Dendritic cell treated with granulocyte-macrophage colony-stimulating factor and Interleukin-4, amounts not matched to agents 40 ng/mL and 50 ng/mL, for 4 days (primary cell): ENCODE measurements at regions of chr2 and their contacts with region 1.

Region 1: DNA sequence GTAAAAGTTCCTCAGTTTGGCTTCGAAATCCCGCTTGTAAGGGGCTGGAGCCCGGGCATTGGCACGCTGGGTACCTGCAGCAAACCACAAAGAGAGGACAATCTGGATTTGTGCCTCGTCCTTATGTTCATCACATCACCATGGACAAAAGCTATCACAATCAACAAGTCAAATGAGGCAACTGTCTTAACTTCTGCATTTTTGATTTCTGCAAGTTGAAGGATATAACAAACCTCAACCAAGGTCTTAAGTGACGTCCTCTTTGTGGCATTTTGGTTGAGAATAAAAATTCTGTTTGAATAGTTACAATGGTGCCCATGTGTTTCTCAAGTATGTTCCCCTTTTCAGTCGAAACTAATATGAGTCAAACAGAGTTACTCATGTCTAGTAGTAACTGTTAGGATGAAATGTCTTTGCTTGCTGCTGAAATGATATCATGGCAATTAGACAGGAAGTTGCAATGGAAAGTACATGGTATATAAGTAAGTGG is 70.8 kb upstream of the STK17B start:
- H3K4me3 Mint-ChIP-seq: no peak overlapping the region
- H3K27ac Mint-ChIP-seq: peak overlapping the region; percentile 92
- H3K4me1 Mint-ChIP-seq: peaks cover 62% of the 10 kb centered on the region
- H3K27me3 Mint-ChIP-seq: no peaks in the 10 kb centered on the region

Region 2: DNA sequence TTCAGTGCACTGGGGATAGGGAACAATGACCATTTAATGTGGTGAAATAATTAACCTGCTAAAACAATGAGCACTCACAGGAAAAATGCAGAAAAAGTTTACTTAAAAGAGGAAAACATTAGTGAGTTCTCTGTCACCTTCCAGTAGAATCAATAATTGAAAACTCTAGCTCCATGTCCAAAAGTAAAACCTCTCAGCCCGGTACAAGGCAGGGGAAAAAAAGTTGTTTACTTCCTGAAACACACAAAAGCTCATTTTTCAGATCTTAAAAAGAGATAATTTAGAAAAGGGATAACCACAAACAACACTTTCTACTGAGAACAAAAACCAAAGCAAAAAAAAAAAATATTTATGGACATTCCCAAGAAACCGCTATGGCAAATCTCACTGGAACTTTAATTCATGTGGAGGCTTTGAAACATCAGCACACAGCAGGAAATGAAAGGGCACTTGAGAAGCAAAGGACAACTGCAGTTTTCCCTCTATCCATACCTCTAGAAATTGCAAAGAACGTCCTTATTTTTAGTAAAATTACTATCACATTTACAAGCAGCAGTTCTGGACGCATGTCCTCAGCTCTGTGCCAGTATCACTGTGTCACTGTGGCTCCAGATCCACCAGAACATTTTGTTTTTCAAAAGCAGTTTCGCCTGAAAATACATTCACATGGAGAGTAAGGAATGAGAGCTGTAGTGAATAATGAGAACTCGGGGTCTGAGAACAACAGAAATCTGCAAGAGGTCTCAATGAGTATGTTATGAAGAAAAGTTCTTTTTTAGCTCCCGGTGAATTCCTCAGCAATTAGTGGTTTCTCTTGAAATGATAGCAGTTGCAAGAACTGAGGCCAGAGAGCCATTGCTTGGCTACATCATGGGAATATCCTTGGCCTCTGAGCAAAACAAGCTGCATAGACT is 128.9 kb before region 1 on chr2:
- intact Hi-C with region 1: no loop called
- H3K4me3 Mint-ChIP-seq: no peak overlapping the region
- H3K27ac Mint-ChIP-seq: peak overlapping the region; percentile 50
- H3K4me1 Mint-ChIP-seq: no peaks in the 10 kb centered on the region
- H3K27me3 Mint-ChIP-seq: no peaks in the 10 kb centered on the region

Region 3: DNA sequence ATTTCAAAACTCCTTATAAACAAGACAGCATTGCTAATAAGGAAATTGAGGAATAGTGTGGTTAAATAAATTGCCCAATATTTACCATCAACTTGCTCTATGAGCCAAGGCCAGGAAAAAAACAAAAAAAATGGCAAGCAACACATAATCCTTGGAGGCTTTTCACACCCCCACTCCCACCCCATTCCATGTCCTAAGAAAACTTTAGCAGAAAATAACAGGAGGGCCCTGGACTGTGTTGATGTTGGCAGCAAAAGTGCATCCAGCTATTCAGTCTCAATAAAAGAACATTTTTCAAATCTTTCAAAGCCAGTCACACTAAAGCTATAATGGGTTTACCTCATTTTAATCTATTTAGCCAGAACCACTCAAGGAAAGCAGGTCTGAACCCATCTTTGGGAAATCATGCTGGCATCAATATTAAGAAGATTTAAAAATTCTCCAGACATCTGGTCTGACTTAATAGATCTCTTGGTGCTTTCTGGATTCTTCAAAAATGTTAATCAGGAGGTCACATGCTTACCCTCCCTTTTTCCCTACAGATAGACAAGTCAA is 36.2 kb before region 1 on chr2:
- intact Hi-C with region 1: loop called (anchors 1 kb)
- H3K4me3 Mint-ChIP-seq: no peak overlapping the region
- H3K27ac Mint-ChIP-seq: no peak overlapping the region
- H3K4me1 Mint-ChIP-seq: peaks cover 19% of the 10 kb centered on the region
- H3K27me3 Mint-ChIP-seq: no peaks in the 10 kb centered on the region

Region 4: GRCh38 chr2:196263181-196263747 is 21.1 kb after region 1 on chr2:
- intact Hi-C with region 1: loop called (anchors 1 kb)
- H3K4me3 Mint-ChIP-seq: peak overlapping the region; percentile 32
- H3K27ac Mint-ChIP-seq: peak overlapping the region; percentile 89
- H3K4me1 Mint-ChIP-seq: peaks cover 38% of the 10 kb centered on the region
- H3K27me3 Mint-ChIP-seq: no peaks in the 10 kb centered on the region

Region 5: GRCh38 chr2:196268538-196269338 is 26.6 kb after region 1 on chr2:
- intact Hi-C with region 1: loop called (anchors 1 kb)
- H3K4me3 Mint-ChIP-seq: peak overlapping the region; percentile 40
- H3K27ac Mint-ChIP-seq: peak overlapping the region; percentile 89
- H3K4me1 Mint-ChIP-seq: peaks cover 38% of the 10 kb centered on the region
- H3K27me3 Mint-ChIP-seq: no peaks in the 10 kb centered on the region

Region 6: GRCh38 chr2:196337208-196337953 is 95.2 kb after region 1 on chr2:
- intact Hi-C with region 1: no loop called
- H3K4me3 Mint-ChIP-seq: no peak overlapping the region
- H3K27ac Mint-ChIP-seq: no peak overlapping the region
- H3K4me1 Mint-ChIP-seq: peaks cover 6% of the 10 kb centered on the region
- H3K27me3 Mint-ChIP-seq: no peaks in the 10 kb centered on the region